CD4-positive, alpha-beta T cell (primary cell): ENCODE measurements at regions of chr22 and their contacts with region 1.

Region 1: DNA sequence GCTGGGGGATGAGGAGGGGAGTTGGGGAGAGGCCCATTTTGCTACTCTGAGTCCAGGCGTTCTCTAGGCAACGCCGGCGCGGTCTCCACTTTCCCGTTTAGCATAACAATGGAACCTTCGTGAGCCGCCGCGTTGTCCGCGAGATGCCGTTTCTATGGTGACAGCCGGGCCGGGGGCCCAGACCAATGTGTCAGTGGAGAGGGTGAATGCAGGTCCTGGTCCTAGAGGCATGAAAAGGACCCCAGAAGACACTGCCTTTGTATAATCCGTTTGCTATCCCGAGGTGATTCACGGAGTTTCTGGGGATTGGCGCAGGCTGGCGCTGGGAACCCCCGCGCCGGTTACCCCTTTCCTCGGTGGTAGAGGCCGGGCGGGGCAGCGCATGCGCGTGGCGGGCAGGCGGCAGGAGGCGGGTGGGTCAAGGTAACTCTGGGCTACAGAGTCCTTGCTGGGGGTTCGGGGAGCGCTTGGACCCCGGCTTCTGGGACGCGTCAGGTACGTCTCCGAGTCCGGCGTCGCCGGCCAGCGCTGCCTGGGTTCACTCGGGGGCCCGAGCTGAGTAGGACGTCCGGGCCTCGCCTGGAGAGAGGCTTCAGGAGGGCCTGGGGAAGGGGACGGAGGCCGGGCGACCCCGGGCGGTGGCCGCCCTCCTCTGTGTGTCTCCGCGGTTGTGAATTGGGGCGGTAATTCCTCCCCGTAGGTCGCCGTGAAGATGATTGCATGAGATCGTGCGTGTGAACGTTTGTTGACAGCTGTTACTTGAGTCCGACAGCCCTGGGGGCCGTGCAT is at the starts of genes CBY1 and FAM227A:
- DNase-seq: peak; percentile 74 to 92 (median 82)
- ATAC-seq: peak; percentile 78
- H3K4me3 ChIP-seq: peak within 1 kb of the TSS; percentile 86
- H3K4me3 Mint-ChIP-seq: peak within 1 kb of the TSS; percentile 97
- H3K27ac ChIP-seq: peak within 1 kb of the TSS; percentile 83 to 94
- H3K27ac Mint-ChIP-seq: peak within 1 kb of the TSS; percentile 98
- H3K4me1 ChIP-seq: peaks cover 19% of the 10 kb centered on the region
- H3K4me1 Mint-ChIP-seq: peaks cover 23% of the 10 kb centered on the region
- H3K27me3 ChIP-seq: no peaks in the 10 kb centered on the region
- H3K27me3 Mint-ChIP-seq: no peaks in the 10 kb centered on the region
- CTCF ChIP-seq: no peak
- total RNA-seq, gene CBY1: 4.6 to 7.6 TPM
- total RNA-seq, gene FAM227A: 0.34 to 0.91 TPM

Region 2: GRCh38 chr22:38272373-38273134 is 383.9 kb before region 1 on chr22 and contains the start of gene TMEM184B:
- CTCF ChIA-PET with region 1: no interaction called
- POLR2A ChIA-PET with region 1: no interaction called
- intact Hi-C with region 1: loop called in 1 of 2 experiments (anchors 10 kb)
- DNase-seq: peak; percentile 65 to 95 (median 80)
- ATAC-seq: peak; percentile 93
- H3K4me3 ChIP-seq: peak within 1 kb of the TSS; percentile 89
- H3K4me3 Mint-ChIP-seq: peak within 1 kb of the TSS; percentile 95
- H3K27ac ChIP-seq: peak within 1 kb of the TSS; percentile 77 to 90
- H3K27ac Mint-ChIP-seq: peak within 1 kb of the TSS; percentile 95
- H3K4me1 ChIP-seq: peaks cover 50% of the 10 kb centered on the region
- H3K4me1 Mint-ChIP-seq: peaks cover 55% of the 10 kb centered on the region
- H3K27me3 ChIP-seq: no peaks in the 10 kb centered on the region
- H3K27me3 Mint-ChIP-seq: no peaks in the 10 kb centered on the region
- CTCF ChIP-seq: no peak
- total RNA-seq, gene TMEM184B: 49.3 to 50.1 TPM

Region 3: GRCh38 chr22:38569972-38570778 is 86.3 kb before region 1 on chr22 and contains the start of gene DMC1:
- CTCF ChIA-PET with region 1: no interaction called
- POLR2A ChIA-PET with region 1: no interaction called
- intact Hi-C with region 1: loop called in 1 of 2 experiments (anchors 5 kb)
- DNase-seq: peak; percentile 93 to 100 (median 97)
- ATAC-seq: peak; percentile 92
- H3K4me3 ChIP-seq: peak within 1 kb of the TSS; percentile 89
- H3K4me3 Mint-ChIP-seq: peak within 1 kb of the TSS; percentile 90
- H3K27ac ChIP-seq: peak within 1 kb of the TSS in 1 of 2 donors; percentile 44
- H3K27ac Mint-ChIP-seq: peak within 1 kb of the TSS; percentile 80
- H3K4me1 ChIP-seq: peaks cover 20% of the 10 kb centered on the region
- H3K4me1 Mint-ChIP-seq: peaks cover 17% of the 10 kb centered on the region
- H3K27me3 ChIP-seq: no peaks in the 10 kb centered on the region
- H3K27me3 Mint-ChIP-seq: no peaks in the 10 kb centered on the region
- CTCF ChIP-seq: no peak
- total RNA-seq, gene DMC1: 0.52 to 0.95 TPM

Region 4: GRCh38 chr22:38681784-38682335 is 25.4 kb after region 1 on chr22 and contains the start of gene TOMM22:
- CTCF ChIA-PET with region 1: interaction called, 22 read pairs
- POLR2A ChIA-PET with region 1: interaction called, 19 read pairs
- intact Hi-C with region 1: loop called (anchors 1 kb)
- DNase-seq: peak; percentile 67 to 92 (median 80)
- ATAC-seq: peak; percentile 88
- H3K4me3 ChIP-seq: peak within 1 kb of the TSS; percentile 98
- H3K4me3 Mint-ChIP-seq: peak within 1 kb of the TSS; percentile 98
- H3K27ac ChIP-seq: peak within 1 kb of the TSS; percentile 79 to 84
- H3K27ac Mint-ChIP-seq: peak within 1 kb of the TSS; percentile 87
- H3K4me1 ChIP-seq: peaks cover 18% of the 10 kb centered on the region
- H3K4me1 Mint-ChIP-seq: peaks cover 24% of the 10 kb centered on the region
- H3K27me3 ChIP-seq: no peaks in the 10 kb centered on the region
- H3K27me3 Mint-ChIP-seq: no peaks in the 10 kb centered on the region
- CTCF ChIP-seq: peak; percentile 65
- total RNA-seq, gene TOMM22: 53.7 to 54.8 TPM

Region 5: GRCh38 chr22:38793721-38794466 is 137.4 kb after region 1 on chr22 and contains the start of gene DNAL4:
- CTCF ChIA-PET with region 1: no interaction called
- POLR2A ChIA-PET with region 1: no interaction called
- intact Hi-C with region 1: loop called in 1 of 2 experiments (anchors 5 kb)
- DNase-seq: peak; percentile 82 to 98 (median 89)
- ATAC-seq: peak; percentile 98
- H3K4me3 ChIP-seq: peak within 1 kb of the TSS; percentile 69
- H3K4me3 Mint-ChIP-seq: peak within 1 kb of the TSS; percentile 96
- H3K27ac ChIP-seq: peak within 1 kb of the TSS in 1 of 2 donors; percentile 43
- H3K27ac Mint-ChIP-seq: peak within 1 kb of the TSS; percentile 90
- H3K4me1 ChIP-seq: peaks cover 22% of the 10 kb centered on the region
- H3K4me1 Mint-ChIP-seq: peaks cover 46% of the 10 kb centered on the region
- H3K27me3 ChIP-seq: peaks cover 0 to 2% of the 10 kb centered on the region in 2 experiments
- H3K27me3 Mint-ChIP-seq: peaks cover 4% of the 10 kb centered on the region
- CTCF ChIP-seq: no peak
- total RNA-seq, gene DNAL4: 1.9 to 2.7 TPM

Region 6: DNA sequence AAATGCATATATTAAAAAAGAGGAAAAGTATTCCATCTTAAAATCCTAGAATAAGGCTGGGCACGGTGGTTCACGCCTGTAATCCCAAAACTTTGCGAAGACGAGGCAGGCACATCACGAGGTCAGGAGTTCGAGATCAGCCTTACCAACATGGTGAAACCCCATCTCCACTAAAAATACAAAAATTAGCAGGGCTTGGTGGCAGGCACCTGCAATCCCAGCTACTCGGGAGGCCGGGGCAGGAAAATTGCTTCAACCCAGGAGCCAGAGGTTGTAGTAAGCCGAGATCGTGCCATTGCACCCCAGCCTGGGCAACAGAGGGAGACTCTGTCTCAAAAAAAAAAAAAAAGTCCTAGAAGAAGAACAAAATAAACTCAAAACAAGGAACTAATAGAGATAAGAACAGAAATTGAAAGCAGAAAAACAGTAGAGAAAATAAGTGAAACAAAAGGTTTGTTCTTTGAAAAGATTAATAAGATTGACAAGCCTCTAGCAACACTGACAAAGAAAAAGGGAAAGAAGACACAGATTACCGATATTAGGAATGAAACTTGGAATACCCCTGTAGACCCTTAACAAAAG is 541.0 kb after region 1 on chr22:
- CTCF ChIA-PET with region 1: no interaction called
- POLR2A ChIA-PET with region 1: no interaction called
- intact Hi-C with region 1: no loop called
- DNase-seq: no peak
- ATAC-seq: no peak
- H3K4me3 ChIP-seq: no peak overlapping the region
- H3K4me3 Mint-ChIP-seq: no peak overlapping the region
- H3K27ac ChIP-seq: no peak overlapping the region
- H3K27ac Mint-ChIP-seq: no peak overlapping the region
- H3K4me1 ChIP-seq: no peaks in the 10 kb centered on the region
- H3K4me1 Mint-ChIP-seq: no peaks in the 10 kb centered on the region
- H3K27me3 ChIP-seq: no peaks in the 10 kb centered on the region
- H3K27me3 Mint-ChIP-seq: no peaks in the 10 kb centered on the region
- CTCF ChIP-seq: no peak